Activated T-helper 1 cell treated with anti-CD3 and anti-CD28 coated beads, Interleukin-12 subunit alpha, Interleukin-12 subunit beta, Interleukin-2, Interleukin-4 antibody, amounts not matched to agents 30 ng/mL and 10 ng/mL and 1 ng/mL, durations not matched to agents 14 hours and 24 hours and 36 hours (primary cell): ENCODE measurements at regions of chr16 and their contacts with region 1.

Region 1: DNA sequence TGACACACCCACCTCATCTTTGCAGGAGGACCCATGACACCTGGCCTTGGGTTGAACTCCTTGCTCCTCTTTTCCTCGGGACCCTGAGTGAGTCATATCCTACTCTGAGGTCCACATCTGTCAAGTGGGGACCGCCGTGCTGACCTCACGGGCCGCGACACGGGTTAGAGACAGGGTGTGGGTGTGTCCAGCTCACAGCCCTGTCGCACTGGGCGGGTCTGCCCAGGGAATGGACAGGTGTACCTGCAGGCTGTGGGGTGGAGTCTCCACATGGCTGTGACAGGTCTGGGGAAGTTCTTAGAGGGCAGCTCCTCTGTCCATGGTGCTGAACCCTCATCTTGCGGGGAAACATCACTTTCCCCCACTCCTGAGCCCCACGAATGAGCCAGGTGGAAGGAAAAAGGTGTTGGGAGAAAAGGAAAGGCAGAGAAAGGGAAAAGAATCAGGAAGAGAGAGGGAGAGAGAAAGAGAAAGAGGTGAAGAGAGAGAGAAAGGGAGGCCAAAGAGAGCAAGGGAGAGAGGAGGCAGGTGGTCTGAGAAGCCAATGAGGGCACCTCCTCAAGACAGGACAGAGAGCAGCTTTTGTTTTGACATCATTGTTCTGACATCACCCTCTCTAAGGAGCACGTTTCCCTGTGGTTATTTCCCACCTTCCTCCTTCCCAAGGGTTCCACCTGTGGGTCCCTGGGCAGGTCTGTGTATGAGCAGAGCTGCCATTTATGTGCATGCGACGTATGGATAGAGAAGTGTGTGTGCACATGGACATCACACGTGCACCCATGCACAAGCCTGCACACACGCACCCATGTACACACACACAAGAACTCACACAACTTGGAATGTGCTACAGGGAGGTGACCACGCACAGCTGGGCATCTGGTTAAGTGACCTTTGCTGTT is 32.6 kb upstream of the CBFA2T3 start:
- DNase-seq: no peak
- H3K4me3 Mint-ChIP-seq: no peak overlapping the region
- H3K27ac Mint-ChIP-seq: no peak overlapping the region
- H3K4me1 Mint-ChIP-seq: peaks cover 6% of the 10 kb centered on the region
- H3K27me3 Mint-ChIP-seq: peaks cover 8% of the 10 kb centered on the region

Region 2: GRCh38 chr16:88803264-88803987 is 206.1 kb before region 1 on chr16 and contains the start of gene CDT1:
- intact Hi-C with region 1: no loop called
- DNase-seq: peak; percentile 84
- H3K4me3 Mint-ChIP-seq: peak within 1 kb of the TSS; percentile 85
- H3K27ac Mint-ChIP-seq: peak within 1 kb of the TSS; percentile 84
- H3K4me1 Mint-ChIP-seq: peaks cover 15% of the 10 kb centered on the region
- H3K27me3 Mint-ChIP-seq: no peaks in the 10 kb centered on the region
- total RNA-seq, gene CDT1: 95.4 and 97.3 TPM in 2 replicates

Region 3: GRCh38 chr16:89037261-89038152 is 27.9 kb after region 1 on chr16:
- intact Hi-C with region 1: loop called (anchors 2 kb)
- DNase-seq: peak; percentile 27
- H3K4me3 Mint-ChIP-seq: no peak overlapping the region
- H3K27ac Mint-ChIP-seq: no peak overlapping the region
- H3K4me1 Mint-ChIP-seq: peaks cover 15% of the 10 kb centered on the region
- H3K27me3 Mint-ChIP-seq: peaks cover 7% of the 10 kb centered on the region